Activated T-helper 1 cell treated with anti-CD3 and anti-CD28 coated beads, Interleukin-12 subunit alpha, Interleukin-12 subunit beta, Interleukin-2, Interleukin-4 antibody, amounts not matched to agents 30 ng/mL and 10 ng/mL and 1 ng/mL, durations not matched to agents 14 hours and 24 hours and 36 hours (primary cell): ENCODE measurements at regions of chr14 and their contacts with region 1.

Region 1: GRCh38 chr14:50321009-50321660 is 9.0 kb downstream of the DMAC2L start:
- DNase-seq: peak; percentile 68
- H3K4me3 Mint-ChIP-seq: no peak overlapping the region
- H3K27ac Mint-ChIP-seq: no peak overlapping the region
- H3K4me1 Mint-ChIP-seq: peaks cover 20% of the 10 kb centered on the region
- H3K27me3 Mint-ChIP-seq: no peaks in the 10 kb centered on the region

Region 2: DNA sequence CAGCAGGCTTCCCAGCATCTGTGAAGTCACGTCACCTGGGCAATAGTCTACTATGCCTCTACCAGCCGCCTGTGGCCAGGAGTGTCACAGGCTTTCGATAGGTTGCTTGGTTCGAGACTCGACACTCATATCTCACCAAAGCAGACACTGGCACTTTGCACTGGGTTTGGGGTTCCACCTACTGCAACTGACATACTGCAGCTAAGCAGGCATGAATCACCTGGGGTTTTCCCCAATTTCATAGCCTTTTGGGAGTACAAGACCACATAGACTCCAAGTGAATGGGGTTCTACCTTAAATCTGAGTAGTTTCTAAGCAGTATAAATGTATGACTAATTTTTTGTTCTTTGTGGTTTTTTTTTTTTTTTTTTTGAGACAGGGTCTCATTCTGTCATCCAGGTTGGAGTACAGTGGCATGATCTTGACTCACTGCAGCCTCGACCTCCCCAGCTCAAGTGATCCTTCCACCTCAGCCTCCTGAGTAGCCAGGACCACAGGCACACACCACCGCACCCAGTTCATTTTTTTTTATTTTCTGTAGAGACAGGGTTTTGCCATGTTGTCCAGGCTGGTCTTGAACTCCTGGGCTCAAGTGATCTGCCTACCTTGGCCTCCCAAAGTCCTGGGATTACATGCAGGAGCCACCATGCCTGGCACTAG is 23.1 kb after region 1 on chr14:
- intact Hi-C with region 1: loop called (anchors 1 kb)
- DNase-seq: peak; percentile 47
- H3K4me3 Mint-ChIP-seq: peak overlapping the region; percentile 30
- H3K27ac Mint-ChIP-seq: peak overlapping the region; percentile 69
- H3K4me1 Mint-ChIP-seq: peaks cover 32% of the 10 kb centered on the region
- H3K27me3 Mint-ChIP-seq: peaks cover 18% of the 10 kb centered on the region

Region 3: GRCh38 chr14:50363714-50364111 is 42.6 kb after region 1 on chr14:
- intact Hi-C with region 1: loop called (anchors 2 kb)
- DNase-seq: peak; percentile 46
- H3K4me3 Mint-ChIP-seq: peak overlapping the region; percentile 84
- H3K27ac Mint-ChIP-seq: peak overlapping the region; percentile 94
- H3K4me1 Mint-ChIP-seq: peaks cover 27% of the 10 kb centered on the region
- H3K27me3 Mint-ChIP-seq: no peaks in the 10 kb centered on the region

Region 4: DNA sequence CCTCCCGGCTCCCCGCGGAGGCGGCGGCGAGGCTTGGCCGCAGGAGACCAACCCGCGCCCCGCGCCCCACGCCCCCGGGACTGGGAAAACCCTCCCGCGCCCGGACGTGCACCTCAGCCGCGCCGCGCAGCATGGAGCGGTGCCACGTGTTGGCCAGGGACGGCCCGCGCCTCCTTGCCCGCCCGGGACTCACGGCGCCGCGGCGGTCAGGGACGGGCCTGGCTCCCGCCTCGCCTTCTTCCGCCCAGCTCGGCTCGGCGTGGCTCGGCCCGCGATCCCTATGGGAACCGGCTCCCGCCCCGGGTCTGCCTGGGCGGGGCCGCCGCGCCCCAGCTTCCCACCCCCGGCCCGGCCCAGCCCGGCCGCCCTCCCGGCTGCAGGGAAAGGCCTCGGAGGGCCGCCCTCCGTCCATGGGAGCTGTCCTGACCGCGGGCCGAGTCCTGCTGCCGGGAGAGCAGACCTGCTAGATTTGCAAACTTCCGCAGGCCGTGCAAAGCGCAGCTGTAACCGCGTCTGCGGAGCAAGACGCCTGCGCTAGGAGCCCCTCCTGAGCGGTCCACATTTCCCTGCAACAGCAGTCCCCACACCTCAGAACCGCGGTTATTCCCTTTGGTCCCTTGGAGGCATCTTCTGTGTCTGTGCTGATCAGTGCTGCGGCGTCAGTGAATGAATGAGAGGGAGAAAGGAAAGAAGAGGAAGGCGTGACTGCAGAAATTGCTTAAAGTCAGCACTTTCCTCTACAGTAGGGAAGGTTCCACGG is 75.7 kb after region 1 on chr14 and contains the start of gene CDKL1:
- intact Hi-C with region 1: loop called (anchors 2 kb)
- DNase-seq: peak; percentile 22
- H3K4me3 Mint-ChIP-seq: peak within 1 kb of the TSS; percentile 85
- H3K27ac Mint-ChIP-seq: peak within 1 kb of the TSS; percentile 79
- H3K4me1 Mint-ChIP-seq: peaks cover 14% of the 10 kb centered on the region
- H3K27me3 Mint-ChIP-seq: peaks cover 25% of the 10 kb centered on the region
- total RNA-seq, gene CDKL1: 2.4 and 2.5 TPM in 2 replicates

Region 5: DNA sequence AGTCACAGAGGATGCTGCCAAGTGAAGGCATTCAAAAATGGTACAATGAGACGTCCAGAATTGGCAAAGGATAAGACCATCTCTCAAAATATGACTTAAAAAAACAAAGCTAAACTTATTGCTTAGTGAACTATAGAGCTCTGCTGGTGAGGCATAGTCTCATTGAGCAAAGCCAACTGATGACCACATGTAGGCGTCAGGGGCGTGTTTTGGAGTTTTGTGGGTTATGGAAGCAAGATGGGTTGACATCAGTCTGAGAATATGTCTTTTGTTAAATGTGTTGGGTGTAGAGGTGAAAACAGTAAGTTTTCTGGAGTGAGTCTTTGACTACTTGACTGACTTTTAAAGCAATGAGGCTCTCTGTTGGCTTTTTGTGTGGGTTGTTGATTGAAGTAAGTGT is 286.0 kb after region 1 on chr14:
- intact Hi-C with region 1: loop called (anchors 5 kb)
- DNase-seq: no peak
- H3K4me3 Mint-ChIP-seq: no peak overlapping the region
- H3K27ac Mint-ChIP-seq: peak overlapping the region; percentile 0
- H3K4me1 Mint-ChIP-seq: peaks cover 7% of the 10 kb centered on the region
- H3K27me3 Mint-ChIP-seq: peaks cover 16% of the 10 kb centered on the region

Region 6: DNA sequence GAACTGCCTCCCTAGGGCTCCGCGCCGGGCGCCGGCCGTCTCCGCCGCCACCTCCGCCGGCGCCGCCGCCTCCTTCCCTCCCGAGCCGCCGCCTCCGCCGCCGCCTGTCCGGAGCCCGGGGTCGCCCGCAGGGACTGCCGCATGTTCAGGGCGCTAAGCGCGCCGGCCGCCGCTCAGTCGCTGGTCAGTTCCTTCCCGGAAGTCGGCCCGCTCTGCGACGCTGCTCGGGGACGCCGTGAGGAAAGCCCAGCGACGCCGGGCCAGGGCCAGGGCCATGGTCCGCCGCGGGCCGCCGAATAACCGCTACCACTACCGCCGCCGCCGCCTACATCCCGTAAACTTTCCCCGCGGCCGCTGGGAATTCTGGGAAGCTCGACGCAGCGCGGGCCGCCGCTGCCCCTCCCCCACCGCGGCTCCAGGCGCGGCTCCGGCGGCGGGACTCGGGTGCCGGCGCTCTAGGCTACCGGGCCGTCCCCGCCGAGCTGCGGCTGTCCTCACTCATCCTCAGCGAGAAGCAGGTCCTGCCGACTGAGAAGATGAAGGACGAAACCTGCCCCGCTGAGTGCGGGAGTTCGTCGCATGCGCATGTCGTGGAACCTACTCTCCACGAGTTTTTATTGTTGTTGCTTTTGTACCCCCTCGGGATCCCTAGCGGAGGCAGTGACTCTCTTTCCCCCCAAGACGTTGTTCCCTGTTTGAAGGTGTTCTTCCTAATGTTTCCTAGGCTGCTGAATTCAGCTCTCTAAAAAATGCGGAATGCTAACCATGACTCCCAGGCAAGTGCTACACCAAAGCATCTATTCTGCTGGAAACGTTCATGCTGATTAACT is 347.1 kb after region 1 on chr14 and contains the start of gene SAV1:
- intact Hi-C with region 1: loop called (anchors 2 kb)
- DNase-seq: peak; percentile 20
- H3K4me3 Mint-ChIP-seq: peak within 1 kb of the TSS; percentile 86
- H3K27ac Mint-ChIP-seq: peak within 1 kb of the TSS; percentile 47
- H3K4me1 Mint-ChIP-seq: peaks cover 15% of the 10 kb centered on the region
- H3K27me3 Mint-ChIP-seq: peaks cover 10% of the 10 kb centered on the region
- total RNA-seq, gene SAV1: 10.3 and 12.3 TPM in 2 replicates

Region 7: GRCh38 chr14:50778721-50779483 is 457.8 kb after region 1 on chr14:
- intact Hi-C with region 1: loop called (anchors 1 kb)
- DNase-seq: no peak
- H3K4me3 Mint-ChIP-seq: no peak overlapping the region
- H3K27ac Mint-ChIP-seq: no peak overlapping the region
- H3K4me1 Mint-ChIP-seq: peaks cover 25% of the 10 kb centered on the region
- H3K27me3 Mint-ChIP-seq: no peaks in the 10 kb centered on the region